ENCODE measurements at regions of chr9 and their contacts with region 1.

Region 1: GRCh38 chr9:114434878-114435311 is 47.1 kb upstream of the AKNA start:
- DNase-seq: peak; percentile 47 to 63
- ATAC-seq: peak; percentile 77 to 91; a peak in 5 of 6 replicates
- H3K4me3 ChIP-seq: no peak overlapping the region
- H3K27ac ChIP-seq: no peak overlapping the region
- H3K4me1 ChIP-seq: no peaks in the 10 kb centered on the region
- CTCF ChIP-seq: peak; percentile 66
- EP300 ChIP-seq: no peak
- POLR2A ChIP-seq: no peak
- RAD21 ChIP-seq: peak; percentile 78 to 87

Region 2: DNA sequence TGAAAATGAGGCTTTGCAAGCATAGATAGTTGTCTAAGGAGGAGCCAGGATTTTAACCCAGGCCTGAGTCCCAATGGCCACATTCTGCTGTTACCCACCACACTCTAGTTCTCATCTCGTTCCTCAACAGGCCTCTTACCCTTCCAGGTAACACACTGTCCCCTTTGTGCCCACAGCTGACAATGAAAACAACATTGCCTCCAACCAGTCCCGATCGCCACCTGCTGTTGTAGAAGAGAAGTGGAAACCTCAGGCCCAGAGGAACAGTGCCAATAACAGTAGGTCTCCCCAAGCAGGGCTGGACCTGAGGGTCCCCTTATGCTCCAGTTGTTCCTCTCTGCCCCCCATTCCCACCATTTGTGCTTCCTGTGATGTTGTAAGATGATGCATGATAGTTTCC is 387.2 kb before region 1 on chr9:
- CTCF ChIA-PET with region 1: no interaction called
- POLR2A ChIA-PET with region 1: no interaction called
- DNase-seq: peak; percentile 13 to 31
- ATAC-seq: peak in 1 of 2 experiments; percentile 73; a peak in 2 of 6 replicates
- H3K4me3 ChIP-seq: no peak overlapping the region
- H3K27ac ChIP-seq: no peak overlapping the region
- H3K4me1 ChIP-seq: no peaks in the 10 kb centered on the region
- CTCF ChIP-seq: no peak
- EP300 ChIP-seq: no peak
- POLR2A ChIP-seq: no peak
- RAD21 ChIP-seq: peak in 1 of 2 experiments; percentile 45; a peak in 2 of 5 replicates

Region 3: GRCh38 chr9:114387678-114388356 is 47.1 kb before region 1 on chr9 and contains the start of gene AKNA:
- CTCF ChIA-PET with region 1: no interaction called
- POLR2A ChIA-PET with region 1: no interaction called
- DNase-seq: no peak
- ATAC-seq: no peak; a peak in 1 of 6 replicates
- H3K4me3 ChIP-seq: no peak within 1 kb of the TSS
- H3K27ac ChIP-seq: no peak within 1 kb of the TSS
- H3K4me1 ChIP-seq: peaks cover 11% of the 10 kb centered on the region; the same call in 2 of the 3 replicates
- CTCF ChIP-seq: no peak
- EP300 ChIP-seq: no peak
- POLR2A ChIP-seq: no peak
- RAD21 ChIP-seq: no peak
- polyA plus RNA-seq, gene AKNA: 4.4 and 4.6 TPM in 2 replicates

Region 4: DNA sequence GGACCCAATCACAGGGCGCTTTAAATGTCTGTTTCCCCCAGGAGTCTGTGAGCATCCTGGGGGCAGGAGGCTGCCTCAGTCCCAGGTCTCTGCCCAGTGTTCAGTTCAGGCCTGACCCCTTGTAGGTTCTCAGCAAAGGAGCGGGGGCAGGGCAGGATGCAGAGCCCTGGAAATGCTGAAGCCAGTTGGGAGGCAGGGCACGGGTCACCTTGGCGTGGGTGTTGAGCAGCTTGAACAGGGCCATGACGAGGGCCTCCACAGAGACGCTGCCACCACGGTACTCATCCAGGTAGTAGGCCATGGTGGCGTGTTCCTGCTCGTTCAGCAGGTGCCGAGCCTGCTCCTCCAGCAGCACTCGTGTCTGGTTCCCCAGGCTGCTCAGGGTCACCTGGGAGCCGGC is 10.8 kb before region 1 on chr9:
- CTCF ChIA-PET with region 1: interaction called, 38 read pairs
- POLR2A ChIA-PET with region 1: no interaction called
- DNase-seq: no peak
- ATAC-seq: no peak
- H3K4me3 ChIP-seq: no peak overlapping the region
- H3K27ac ChIP-seq: no peak overlapping the region
- H3K4me1 ChIP-seq: no peaks in the 10 kb centered on the region
- CTCF ChIP-seq: no peak
- EP300 ChIP-seq: no peak
- POLR2A ChIP-seq: no peak
- RAD21 ChIP-seq: no peak

Region 5: DNA sequence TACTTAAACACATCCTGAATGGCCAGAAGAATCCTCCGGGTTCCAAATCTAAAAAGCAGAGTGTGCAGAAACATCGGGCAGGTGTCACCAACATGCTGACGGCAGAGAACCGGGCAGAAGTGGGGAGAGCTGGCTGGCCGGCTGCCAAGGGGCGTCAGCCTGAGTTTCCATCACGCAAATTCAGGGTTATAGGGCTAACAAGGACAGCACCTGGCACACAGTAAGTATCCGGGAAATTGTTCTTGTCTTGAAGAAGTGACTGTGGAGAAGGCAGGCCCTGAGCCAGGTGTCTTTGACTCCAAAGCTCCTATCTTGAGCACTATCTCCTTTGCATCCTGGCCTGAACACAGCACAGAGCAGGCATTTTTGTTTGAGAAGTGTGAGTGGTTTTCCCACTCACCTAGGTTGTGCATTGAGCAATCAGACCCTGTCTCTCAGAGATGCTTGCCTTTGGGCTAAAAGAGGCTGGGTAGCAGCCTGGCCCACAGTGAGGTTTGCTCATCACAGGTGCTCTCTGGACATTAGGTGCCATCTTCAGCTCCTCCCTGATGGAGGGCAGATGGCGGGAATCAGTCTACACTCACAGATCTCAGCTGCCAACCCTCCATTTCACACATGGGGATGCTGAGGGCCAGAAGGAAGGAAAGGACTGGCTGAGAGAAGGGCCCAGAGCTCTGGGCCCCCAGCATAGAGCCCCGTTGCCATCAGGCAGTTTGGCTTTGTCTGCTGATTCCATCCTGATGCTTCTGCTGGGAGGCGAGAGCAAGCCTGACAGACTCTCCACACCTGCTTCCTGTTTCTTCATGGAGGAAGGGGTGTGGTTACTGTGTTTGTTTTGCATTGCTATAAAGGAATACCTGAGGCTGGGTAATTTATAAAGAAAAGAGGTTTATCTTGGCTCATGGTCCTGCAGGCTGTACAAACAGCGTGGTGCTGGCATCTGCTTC is 17.6 kb after region 1 on chr9:
- CTCF ChIA-PET with region 1: interaction called, 29 read pairs
- POLR2A ChIA-PET with region 1: no interaction called
- DNase-seq: no peak
- ATAC-seq: no peak
- H3K4me3 ChIP-seq: no peak overlapping the region
- H3K27ac ChIP-seq: no peak overlapping the region
- H3K4me1 ChIP-seq: no peaks in the 10 kb centered on the region
- CTCF ChIP-seq: no peak
- EP300 ChIP-seq: no peak
- POLR2A ChIP-seq: no peak
- RAD21 ChIP-seq: no peak

Region 6: GRCh38 chr9:114505187-114506081 is 70.5 kb after region 1 on chr9 and contains the start of gene WHRN:
- CTCF ChIA-PET with region 1: interaction called, 11 read pairs
- POLR2A ChIA-PET with region 1: no interaction called
- DNase-seq: peak; percentile 84 to 96
- ATAC-seq: peak; percentile 80 to 86
- H3K4me3 ChIP-seq: peak within 1 kb of the TSS; percentile 77
- H3K27ac ChIP-seq: peak within 1 kb of the TSS; percentile 65 to 88
- H3K4me1 ChIP-seq: peaks cover 27% of the 10 kb centered on the region
- CTCF ChIP-seq: no peak
- EP300 ChIP-seq: no peak
- POLR2A ChIP-seq: peak; percentile 47
- RAD21 ChIP-seq: 0 out of 5 replicates have a peak, but pooled peaks of 1 of the 2 experiments have one; percentile 10
- polyA plus RNA-seq, gene WHRN: 1.2 and 1.5 TPM in 2 replicates

Region 7: DNA sequence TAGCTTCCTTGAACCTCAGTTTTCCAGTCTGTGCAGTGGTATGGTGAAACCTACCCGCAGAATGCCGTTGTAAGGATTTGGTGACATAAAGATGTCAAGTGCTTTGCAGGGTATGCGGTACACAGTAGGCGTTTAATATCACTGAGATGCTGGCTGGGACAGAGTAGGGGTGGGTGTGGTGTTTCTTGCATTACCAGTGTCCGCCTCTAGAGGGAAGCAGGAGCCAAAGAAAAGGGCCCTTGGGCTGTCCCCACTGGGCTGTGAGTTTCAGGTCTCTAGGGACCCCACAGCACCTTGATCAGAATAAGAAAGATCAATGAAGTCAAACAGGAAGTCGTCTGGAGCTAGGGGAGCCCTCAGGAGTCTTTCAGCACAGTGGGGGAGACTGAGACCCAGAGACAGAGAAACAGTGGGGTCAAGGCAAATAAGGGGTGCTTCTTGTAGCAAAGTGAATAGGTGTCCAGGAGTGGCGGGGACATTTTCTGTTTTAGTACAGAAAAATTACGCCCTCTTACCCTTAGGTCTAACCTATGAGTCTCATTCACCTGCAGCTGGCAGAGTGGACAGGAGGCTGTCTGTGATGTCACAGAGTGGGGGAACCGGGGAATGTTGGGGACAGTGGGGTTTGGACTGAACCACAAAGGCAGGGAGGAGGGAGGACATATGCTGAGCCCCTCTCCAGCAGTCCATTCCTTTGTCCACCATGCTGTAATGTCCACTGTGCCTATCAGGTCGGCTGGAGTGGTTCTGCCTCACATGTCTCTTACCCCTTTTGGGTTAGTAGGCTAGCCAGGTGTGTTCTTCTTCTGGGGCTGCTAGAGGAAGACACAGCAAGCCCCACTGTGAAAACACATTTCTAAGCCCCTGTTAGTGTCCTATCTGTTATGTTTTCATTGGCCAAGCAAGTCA is 227.4 kb after region 1 on chr9:
- CTCF ChIA-PET with region 1: interaction called, 202 read pairs
- POLR2A ChIA-PET with region 1: no interaction called
- DNase-seq: peak; percentile 33 to 92
- ATAC-seq: peak; percentile 86 to 97
- H3K4me3 ChIP-seq: no peak overlapping the region
- H3K27ac ChIP-seq: peak overlapping the region; percentile 10 to 40; a peak in 4 of 6 replicates
- H3K4me1 ChIP-seq: no peaks in the 10 kb centered on the region
- CTCF ChIP-seq: peak; percentile 88
- EP300 ChIP-seq: no peak
- POLR2A ChIP-seq: no peak
- RAD21 ChIP-seq: peak; percentile 94